Naive thymus-derived CD4-positive, alpha-beta T cell (primary cell): ENCODE measurements at regions of chr19 and their contacts with region 1.

Region 1: GRCh38 chr19:58380722-58381466 is at the start of gene ZNF837:
- DNase-seq: peak; percentile 90 to 100 (median 98)
- ATAC-seq: peak; percentile 93
- H3K4me3 ChIP-seq: peak within 1 kb of the TSS; percentile 97
- H3K4me3 Mint-ChIP-seq: peak within 1 kb of the TSS; percentile 87 to 98 (median 91)
- H3K27ac ChIP-seq: peak within 1 kb of the TSS; percentile 96
- H3K27ac Mint-ChIP-seq: peak within 1 kb of the TSS; percentile 93 to 97 (median 97)
- H3K4me1 ChIP-seq: peaks cover 21 to 25% of the 10 kb centered on the region in 2 donors
- H3K4me1 Mint-ChIP-seq: peaks cover 23 to 40% (median 34%) of the 10 kb centered on the region in 7 donors
- H3K27me3 ChIP-seq: no peaks in the 10 kb centered on the region
- H3K27me3 Mint-ChIP-seq: no peaks in the 10 kb centered on the region
- total RNA-seq, gene ZNF837: 1.4 to 4.3 (median 2.4) TPM

Region 2: GRCh38 chr19:57477191-57478008 is 903.5 kb before region 1 on chr19 and contains the start of gene ZNF772:
- CTCF ChIA-PET with region 1: no interaction called
- POLR2A ChIA-PET with region 1: no interaction called
- intact Hi-C with region 1: loop called in 1 of 2 experiments (anchors 10 kb)
- DNase-seq: peak; percentile 55 to 96 (median 88)
- ATAC-seq: peak; percentile 99
- H3K4me3 ChIP-seq: peak within 1 kb of the TSS; percentile 80
- H3K4me3 Mint-ChIP-seq: peak within 1 kb of the TSS; percentile 87 to 95 (median 92)
- H3K27ac ChIP-seq: peak within 1 kb of the TSS; percentile 77
- H3K27ac Mint-ChIP-seq: peak within 1 kb of the TSS; percentile 84 to 96 (median 89)
- H3K4me1 ChIP-seq: peaks cover 5 to 12% of the 10 kb centered on the region in 2 donors
- H3K4me1 Mint-ChIP-seq: peaks cover 10 to 26% (median 19%) of the 10 kb centered on the region in 7 donors
- H3K27me3 ChIP-seq: no peaks in the 10 kb centered on the region
- H3K27me3 Mint-ChIP-seq: peaks cover 0 to 7% (median 0%) of the 10 kb centered on the region in 5 donors
- total RNA-seq, gene ZNF772: 1.5 to 20.5 (median 4.3) TPM

Region 3: GRCh38 chr19:58346961-58347931 is 33.6 kb before region 1 on chr19:
- CTCF ChIA-PET with region 1: no interaction called
- POLR2A ChIA-PET with region 1: interaction called, 6 read pairs
- intact Hi-C with region 1: loop called (anchors 1 to 5 kb)
- DNase-seq: peak; percentile 50 to 78 (median 68)
- ATAC-seq: peak; percentile 98
- H3K4me3 ChIP-seq: peak overlapping the region; percentile 77
- H3K4me3 Mint-ChIP-seq: peak overlapping the region; percentile 86 to 97 (median 92)
- H3K27ac ChIP-seq: peak overlapping the region; percentile 73
- H3K27ac Mint-ChIP-seq: peak overlapping the region; percentile 71 to 93 (median 85)
- H3K4me1 ChIP-seq: peaks cover 0 to 7% of the 10 kb centered on the region in 2 donors
- H3K4me1 Mint-ChIP-seq: peaks cover 23 to 36% (median 29%) of the 10 kb centered on the region in 7 donors
- H3K27me3 ChIP-seq: no peaks in the 10 kb centered on the region
- H3K27me3 Mint-ChIP-seq: peaks cover 0 to 5% (median 0%) of the 10 kb centered on the region in 5 donors

Region 4: GRCh38 chr19:58408152-58409009 is 27.5 kb after region 1 on chr19 and contains the start of gene ZNF584:
- CTCF ChIA-PET with region 1: no interaction called
- POLR2A ChIA-PET with region 1: interaction called, 5 read pairs
- intact Hi-C with region 1: loop called (anchors 1 kb)
- DNase-seq: peak; percentile 86 to 94 (median 92)
- ATAC-seq: peak; percentile 98
- H3K4me3 ChIP-seq: peak within 1 kb of the TSS; percentile 96
- H3K4me3 Mint-ChIP-seq: peak within 1 kb of the TSS; percentile 82 to 98 (median 95)
- H3K27ac ChIP-seq: peak within 1 kb of the TSS; percentile 87
- H3K27ac Mint-ChIP-seq: peak within 1 kb of the TSS; percentile 83 to 95 (median 93)
- H3K4me1 ChIP-seq: peaks cover 12 to 15% of the 10 kb centered on the region in 2 donors
- H3K4me1 Mint-ChIP-seq: peaks cover 5 to 45% (median 34%) of the 10 kb centered on the region in 7 donors
- H3K27me3 ChIP-seq: no peaks in the 10 kb centered on the region
- H3K27me3 Mint-ChIP-seq: no peaks in the 10 kb centered on the region
- total RNA-seq, gene ZNF584: 4.2 to 12.1 (median 8.8) TPM

Region 5: GRCh38 chr19:58466760-58467589 is 86.1 kb after region 1 on chr19 and contains the start of gene ZNF324:
- CTCF ChIA-PET with region 1: no interaction called
- POLR2A ChIA-PET with region 1: no interaction called
- intact Hi-C with region 1: loop called (anchors 1 to 2 kb)
- DNase-seq: peak; percentile 92 to 97 (median 95)
- ATAC-seq: peak; percentile 98
- H3K4me3 ChIP-seq: peak within 1 kb of the TSS; percentile 92
- H3K4me3 Mint-ChIP-seq: peak within 1 kb of the TSS; percentile 80 to 89 (median 86)
- H3K27ac ChIP-seq: peak within 1 kb of the TSS; percentile 99
- H3K27ac Mint-ChIP-seq: peak within 1 kb of the TSS in 8 of 9 donors; percentile 67 to 91 (median 85)
- H3K4me1 ChIP-seq: peaks cover 7 to 11% of the 10 kb centered on the region in 2 donors
- H3K4me1 Mint-ChIP-seq: peaks cover 14 to 27% (median 22%) of the 10 kb centered on the region in 7 donors
- H3K27me3 ChIP-seq: no peaks in the 10 kb centered on the region
- H3K27me3 Mint-ChIP-seq: peaks cover 0 to 3% (median 0%) of the 10 kb centered on the region in 5 donors
- total RNA-seq, gene ZNF324: 14.2 to 28.0 (median 23.4) TPM

Region 6: DNA sequence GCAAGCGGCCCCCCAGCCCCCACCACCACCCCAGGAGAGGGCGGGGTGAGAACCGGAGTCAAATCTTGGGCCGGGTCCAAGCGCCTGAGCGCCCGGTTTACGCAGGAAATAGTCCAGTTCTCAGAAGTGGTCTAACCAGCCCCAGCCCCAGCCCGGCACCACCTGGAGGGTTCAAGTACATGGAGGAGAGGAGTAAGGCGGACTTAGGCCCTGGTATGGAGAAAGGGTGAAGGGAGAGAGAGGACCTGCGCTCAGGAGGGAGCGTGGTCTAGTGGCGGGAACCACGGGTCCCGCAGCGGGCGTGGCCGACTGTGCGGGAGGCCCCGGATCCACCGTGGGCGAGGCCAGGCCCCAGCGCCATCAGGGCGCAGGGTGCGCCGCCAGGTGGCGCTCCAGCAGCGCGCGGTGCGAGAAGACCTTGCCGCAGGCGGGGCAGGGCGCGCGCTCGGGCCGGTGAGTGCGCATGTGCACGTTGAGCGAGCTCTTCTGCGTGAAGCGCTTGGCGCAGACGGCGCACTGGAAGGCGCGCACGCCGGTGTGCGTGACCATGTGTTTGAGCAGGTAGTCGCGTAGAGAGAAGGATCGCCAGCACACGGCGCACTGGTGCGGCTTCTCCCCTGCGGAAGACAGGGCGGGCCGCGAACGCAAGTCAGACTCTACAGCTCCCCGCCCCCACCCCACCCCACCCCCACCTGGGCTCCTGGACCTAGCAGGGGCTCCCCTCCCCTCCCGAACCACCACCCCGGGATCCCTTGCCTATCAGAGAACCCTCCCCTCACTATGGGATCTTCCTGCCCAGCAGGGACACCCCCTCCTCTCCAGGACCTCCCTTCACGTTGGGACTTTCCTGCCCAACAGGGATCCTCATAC is 133.0 kb after region 1 on chr19:
- CTCF ChIA-PET with region 1: no interaction called
- POLR2A ChIA-PET with region 1: no interaction called
- intact Hi-C with region 1: loop called (anchors 1 kb)
- DNase-seq: peak; percentile 91 to 99 (median 95)
- ATAC-seq: peak; percentile 98
- H3K4me3 ChIP-seq: peak overlapping the region; percentile 39
- H3K4me3 Mint-ChIP-seq: peak overlapping the region; percentile 73 to 93 (median 84)
- H3K27ac ChIP-seq: peak overlapping the region; percentile 65
- H3K27ac Mint-ChIP-seq: peak overlapping the region; percentile 67 to 94 (median 85)
- H3K4me1 ChIP-seq: peaks cover 17 to 21% of the 10 kb centered on the region in 2 donors
- H3K4me1 Mint-ChIP-seq: peaks cover 17 to 40% (median 27%) of the 10 kb centered on the region in 7 donors
- H3K27me3 ChIP-seq: no peaks in the 10 kb centered on the region
- H3K27me3 Mint-ChIP-seq: no peaks in the 10 kb centered on the region